Cardiac septum (tissue), 1 donor: ENCODE measurements at regions of chr3 and their contacts with region 1.

Region 1: GRCh38 chr3:8324740-8325139 is 176.9 kb upstream of the LMCD1 start:
- DNase-seq: no peak

Region 2: DNA sequence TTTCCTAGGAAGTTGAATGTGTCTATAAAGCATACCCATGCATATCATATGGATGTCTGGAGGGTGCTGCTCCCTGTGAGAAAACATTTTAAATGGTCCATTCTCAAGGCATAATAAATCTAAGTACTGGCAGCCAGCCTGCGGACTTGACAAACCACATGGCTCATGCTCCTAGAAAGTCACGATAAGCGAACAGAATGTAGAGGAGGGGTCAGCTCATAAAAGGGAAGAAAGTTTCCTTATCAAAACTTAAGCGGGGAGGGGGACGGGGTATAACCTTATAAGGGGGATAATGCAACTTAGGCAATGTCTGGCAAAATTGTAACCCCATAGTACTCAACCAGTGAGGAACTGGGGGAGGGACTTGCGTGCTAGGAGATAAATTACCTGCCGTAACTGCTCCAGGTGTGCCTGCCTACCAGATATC is 17.1 kb after region 1 on chr3:
- intact Hi-C with region 1: loop called (anchors 2 kb)
- DNase-seq: no peak

Region 3: GRCh38 chr3:8416965-8417364 is 92.2 kb after region 1 on chr3:
- intact Hi-C with region 1: loop called (anchors 5 kb)
- DNase-seq: no peak